PC-3 (cell line): ENCODE measurements at regions of chr22 and their contacts with region 1.

Region 1: DNA sequence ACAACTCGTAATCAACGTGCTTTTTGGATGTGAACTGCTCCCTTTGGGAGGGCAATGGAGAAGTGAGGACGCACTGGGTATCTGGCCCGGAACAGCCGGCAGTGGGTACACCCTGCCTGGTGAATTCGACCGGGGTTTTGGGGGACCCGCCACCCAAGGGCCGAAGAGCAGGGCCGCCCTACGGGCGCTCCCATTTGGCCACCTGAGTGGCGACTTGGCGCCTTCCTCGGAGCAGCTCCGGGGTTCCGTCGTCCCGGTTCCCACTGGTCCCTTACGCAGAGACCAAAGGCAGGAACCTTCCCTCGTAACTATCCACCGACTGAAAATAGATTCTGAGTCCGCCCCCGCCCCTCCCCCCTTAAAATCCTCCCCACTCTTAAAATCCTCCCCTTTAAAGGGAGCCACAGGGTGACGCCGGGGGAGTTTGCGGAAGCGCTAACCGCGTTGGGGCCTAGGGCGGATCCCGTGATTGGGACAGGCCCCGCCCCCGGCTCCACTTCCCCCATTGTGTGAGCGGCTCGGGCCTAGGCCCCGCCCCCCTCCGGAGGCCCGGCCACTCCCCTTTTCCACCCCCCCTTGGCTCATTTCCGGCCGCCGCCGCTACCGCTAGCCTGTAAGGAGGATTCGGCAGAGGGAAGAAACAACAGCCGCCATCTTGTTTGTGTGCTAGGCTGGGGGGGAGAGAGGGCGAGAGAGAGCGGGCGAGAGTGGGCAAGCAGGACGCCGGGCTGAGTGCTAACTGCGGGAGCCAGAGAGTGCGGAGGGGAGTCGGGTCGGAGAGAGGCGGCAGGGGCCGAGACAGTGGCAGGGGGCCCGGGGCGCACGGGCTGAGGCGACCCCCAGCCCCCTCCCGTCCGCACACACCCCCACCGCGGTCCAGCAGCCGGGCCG is 1.0 kb upstream of the EP300 start:
- DNase-seq: peak; percentile 95
- ATAC-seq: peak; percentile 89
- H3K4me3 ChIP-seq: peak overlapping the region; percentile 92
- H3K27ac ChIP-seq: peak overlapping the region; percentile 94
- H3K4me1 ChIP-seq: peaks cover 7% of the 10 kb centered on the region
- H3K27me3 ChIP-seq: no peaks in the 10 kb centered on the region
- CTCF ChIP-seq: no peak

Region 2: GRCh38 chr22:40950962-40951794 is 140.2 kb before region 1 on chr22 and contains the start of gene RBX1:
- CTCF ChIA-PET with region 1: no interaction called
- POLR2A ChIA-PET with region 1: interaction called, 6 read pairs
- intact Hi-C with region 1: loop called (anchors 1 kb)
- DNase-seq: peak; percentile 94
- ATAC-seq: peak; percentile 86
- H3K4me3 ChIP-seq: peak within 1 kb of the TSS; percentile 94
- H3K27ac ChIP-seq: peak within 1 kb of the TSS; percentile 75
- H3K4me1 ChIP-seq: no peaks in the 10 kb centered on the region
- H3K27me3 ChIP-seq: no peaks in the 10 kb centered on the region
- CTCF ChIP-seq: no peak
- total RNA-seq, gene RBX1: 55.0 TPM in 2 replicates

Region 3: DNA sequence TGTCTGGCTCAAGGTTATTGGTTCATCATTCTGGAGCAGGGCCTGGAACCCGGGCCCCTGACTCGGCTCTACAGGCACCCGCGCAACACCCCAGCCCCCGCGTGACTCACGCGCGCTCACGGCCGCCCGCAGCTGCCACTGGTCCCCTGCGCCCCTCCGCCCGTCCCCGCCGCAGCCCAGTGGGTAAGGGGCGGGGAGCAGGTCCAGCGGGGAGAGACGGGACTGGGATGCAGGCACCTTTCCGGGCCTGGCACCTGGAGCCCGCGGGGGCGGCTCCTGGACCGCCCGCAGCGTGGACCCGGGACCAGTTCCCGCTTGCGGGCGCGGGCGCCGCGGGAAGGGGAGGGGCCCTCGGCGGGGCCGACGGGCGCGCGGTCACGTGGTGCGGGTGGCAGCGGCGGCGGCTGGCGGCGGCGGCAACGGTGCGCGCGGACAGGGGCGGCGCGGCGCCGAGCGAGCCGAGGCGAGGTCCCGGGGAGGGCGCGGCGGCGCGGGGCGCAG is 885.1 kb after region 1 on chr22:
- CTCF ChIA-PET with region 1: no interaction called
- POLR2A ChIA-PET with region 1: no interaction called
- intact Hi-C with region 1: no loop called
- DNase-seq: no peak
- ATAC-seq: peak; percentile 46
- H3K4me3 ChIP-seq: peak overlapping the region; percentile 56; the same call in 1 of the 2 replicates
- H3K27ac ChIP-seq: no peak overlapping the region
- H3K4me1 ChIP-seq: no peaks in the 10 kb centered on the region
- H3K27me3 ChIP-seq: peaks cover 16% of the 10 kb centered on the region
- CTCF ChIP-seq: no peak